ENCODE measurements at regions of chrX and their contacts with region 1.

Region 1: DNA sequence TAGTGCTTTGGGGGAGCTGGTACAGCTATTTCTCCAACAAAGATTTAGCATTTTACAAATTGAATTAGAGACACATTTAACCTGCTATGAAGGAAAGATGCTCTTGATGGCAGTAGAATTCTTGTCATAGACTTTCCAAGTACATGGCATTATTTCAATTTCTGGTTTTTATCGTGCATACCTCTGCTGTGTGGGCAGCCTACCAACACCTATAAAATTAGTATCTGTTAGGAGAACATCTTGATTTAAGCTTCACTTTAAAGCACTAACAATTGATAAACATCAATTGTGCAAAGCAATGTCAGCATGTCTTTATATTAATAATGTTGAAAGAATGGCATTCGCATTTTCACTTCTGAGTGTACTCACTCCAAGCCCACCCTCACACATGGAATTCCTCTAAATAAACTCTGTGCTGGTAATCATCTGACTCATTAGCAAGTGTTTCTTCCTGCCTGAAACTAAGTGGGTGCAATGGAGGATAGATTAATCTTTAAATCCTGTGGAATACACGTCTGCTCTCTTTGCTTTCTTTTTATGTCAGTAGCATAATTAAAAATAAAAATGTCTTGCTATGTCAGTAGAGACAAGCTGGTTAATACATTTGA is 279.8 kb upstream of the MAGEB18 start:
- DNase-seq: peak; percentile 73
- H3K4me3 ChIP-seq: no peak overlapping the region
- H3K27ac ChIP-seq: peak overlapping the region; percentile 45
- H3K4me1 ChIP-seq: peaks cover 5% of the 10 kb centered on the region
- H3K27me3 ChIP-seq: no peaks in the 10 kb centered on the region
- CTCF ChIP-seq: peak; percentile 13 to 16
- POLR2A ChIP-seq: no peak

Region 2: GRCh38 chrX:25721564-25721963 is 136.8 kb before region 1 on chrX:
- CTCF ChIA-PET with region 1: interaction called, 3 read pairs
- POLR2A ChIA-PET with region 1: no interaction called
- dilution Hi-C with region 1: no loop called
- intact Hi-C with region 1: loop called (anchors 10 kb)
- DNase-seq: peak; percentile 40
- H3K4me3 ChIP-seq: no peak overlapping the region
- H3K27ac ChIP-seq: no peak overlapping the region
- H3K4me1 ChIP-seq: no peaks in the 10 kb centered on the region
- H3K27me3 ChIP-seq: no peaks in the 10 kb centered on the region
- CTCF ChIP-seq: peak; percentile 12 to 23
- POLR2A ChIP-seq: no peak

Region 3: GRCh38 chrX:25873196-25873595 is 14.8 kb after region 1 on chrX:
- CTCF ChIA-PET with region 1: interaction called, 11 read pairs
- POLR2A ChIA-PET with region 1: no interaction called
- dilution Hi-C with region 1: no loop called
- intact Hi-C with region 1: no loop called
- DNase-seq: peak; percentile 30
- H3K4me3 ChIP-seq: no peak overlapping the region
- H3K27ac ChIP-seq: peak overlapping the region; percentile 7
- H3K4me1 ChIP-seq: peaks cover 25% of the 10 kb centered on the region
- H3K27me3 ChIP-seq: no peaks in the 10 kb centered on the region
- CTCF ChIP-seq: no peak
- POLR2A ChIP-seq: no peak

Region 4: GRCh38 chrX:25897758-25898157 is 39.4 kb after region 1 on chrX:
- CTCF ChIA-PET with region 1: no interaction called
- POLR2A ChIA-PET with region 1: no interaction called
- dilution Hi-C with region 1: no loop called
- intact Hi-C with region 1: no loop called
- DNase-seq: no peak
- H3K4me3 ChIP-seq: no peak overlapping the region
- H3K27ac ChIP-seq: no peak overlapping the region
- H3K4me1 ChIP-seq: no peaks in the 10 kb centered on the region
- H3K27me3 ChIP-seq: no peaks in the 10 kb centered on the region
- CTCF ChIP-seq: no peak
- POLR2A ChIP-seq: no peak

Region 5: DNA sequence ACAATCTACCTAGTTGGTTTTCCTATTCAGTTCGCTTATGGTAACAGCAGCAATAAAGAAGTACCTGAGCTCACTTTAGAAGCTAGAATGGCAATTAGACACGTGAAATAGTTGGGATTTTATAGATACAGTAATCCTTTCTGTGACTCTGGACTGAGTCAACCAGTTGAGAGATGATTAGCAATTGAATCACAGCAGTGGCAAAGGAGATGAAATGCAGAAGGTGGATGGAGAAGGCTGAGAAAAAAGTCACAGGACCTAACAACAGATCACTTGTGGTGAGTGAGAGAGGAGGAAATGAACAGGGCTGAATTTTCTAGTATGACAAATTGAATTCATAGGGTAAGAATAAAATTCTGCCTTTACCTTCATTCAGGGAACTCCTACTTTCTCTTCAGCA is 82.7 kb after region 1 on chrX:
- CTCF ChIA-PET with region 1: no interaction called
- POLR2A ChIA-PET with region 1: interaction called, 4 read pairs
- dilution Hi-C with region 1: no loop called
- intact Hi-C with region 1: loop called (anchors 1 kb)
- DNase-seq: peak; percentile 61
- H3K4me3 ChIP-seq: peak overlapping the region in 1 of 3 experiments; percentile 43
- H3K27ac ChIP-seq: peak overlapping the region; percentile 96
- H3K4me1 ChIP-seq: peaks cover 27% of the 10 kb centered on the region
- H3K27me3 ChIP-seq: no peaks in the 10 kb centered on the region
- CTCF ChIP-seq: no peak
- POLR2A ChIP-seq: no peak

Region 6: GRCh38 chrX:25968920-25969319 is 110.5 kb after region 1 on chrX:
- CTCF ChIA-PET with region 1: interaction called, 30 read pairs
- POLR2A ChIA-PET with region 1: no interaction called
- dilution Hi-C with region 1: no loop called
- intact Hi-C with region 1: loop called (anchors 1 kb)
- DNase-seq: peak; percentile 33
- H3K4me3 ChIP-seq: no peak overlapping the region
- H3K27ac ChIP-seq: no peak overlapping the region
- H3K4me1 ChIP-seq: no peaks in the 10 kb centered on the region
- H3K27me3 ChIP-seq: no peaks in the 10 kb centered on the region
- CTCF ChIP-seq: peak; percentile 49 to 53
- POLR2A ChIP-seq: no peak

Region 7: DNA sequence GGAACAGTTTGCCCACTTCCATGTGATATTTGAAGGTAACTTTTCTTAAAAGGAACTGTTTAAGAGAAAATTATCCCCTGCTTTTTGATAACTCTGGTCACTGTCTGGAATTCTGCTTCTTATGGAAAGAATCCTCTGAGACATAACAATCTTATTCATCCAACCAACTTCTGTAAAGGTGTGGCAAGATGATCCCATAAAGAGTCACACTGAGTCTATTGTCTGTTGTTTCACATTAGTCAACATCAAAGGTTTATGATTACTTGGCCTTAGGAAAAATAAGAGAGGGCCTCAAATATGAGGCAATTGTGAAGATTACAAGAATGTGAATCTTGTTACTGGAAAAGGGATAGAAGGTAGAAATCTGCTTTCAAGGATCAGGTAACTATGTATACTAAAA is 191.7 kb after region 1 on chrX:
- CTCF ChIA-PET with region 1: no interaction called
- POLR2A ChIA-PET with region 1: no interaction called
- dilution Hi-C with region 1: no loop called
- intact Hi-C with region 1: no loop called
- DNase-seq: no peak
- H3K4me3 ChIP-seq: no peak overlapping the region
- H3K27ac ChIP-seq: no peak overlapping the region
- H3K4me1 ChIP-seq: no peaks in the 10 kb centered on the region
- H3K27me3 ChIP-seq: no peaks in the 10 kb centered on the region
- CTCF ChIP-seq: no peak
- POLR2A ChIP-seq: no peak

Region 8: DNA sequence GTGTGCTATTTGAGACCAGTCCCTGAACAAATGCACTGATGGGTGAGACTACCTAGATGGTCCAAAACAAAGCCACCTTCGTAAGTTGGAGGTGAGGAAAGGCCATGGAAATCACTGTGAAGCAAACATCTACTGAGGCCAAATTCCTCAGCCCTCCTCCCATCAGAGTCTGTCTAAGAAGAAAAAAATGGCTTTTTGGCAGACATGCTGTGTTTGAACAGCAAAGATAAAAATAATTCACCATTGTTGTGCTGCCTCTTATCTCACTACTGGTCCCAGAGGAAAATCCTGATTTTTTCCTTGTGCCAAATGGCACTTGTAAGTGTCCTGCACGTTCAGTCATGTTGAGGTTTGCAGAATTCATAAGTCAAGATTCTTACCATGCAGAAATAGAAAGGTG is 287.6 kb after region 1 on chrX:
- CTCF ChIA-PET with region 1: no interaction called
- POLR2A ChIA-PET with region 1: no interaction called
- dilution Hi-C with region 1: no loop called
- intact Hi-C with region 1: loop called (anchors 5 kb)
- DNase-seq: peak; percentile 41
- H3K4me3 ChIP-seq: no peak overlapping the region
- H3K27ac ChIP-seq: no peak overlapping the region
- H3K4me1 ChIP-seq: no peaks in the 10 kb centered on the region
- H3K27me3 ChIP-seq: no peaks in the 10 kb centered on the region
- CTCF ChIP-seq: no peak
- POLR2A ChIP-seq: no peak

Region 9: GRCh38 chrX:26649534-26649933 is 791.2 kb after region 1 on chrX:
- CTCF ChIA-PET with region 1: interaction called, 6 read pairs
- POLR2A ChIA-PET with region 1: no interaction called
- dilution Hi-C with region 1: no loop called
- intact Hi-C with region 1: loop called (anchors 2 kb)
- DNase-seq: no peak
- H3K4me3 ChIP-seq: no peak overlapping the region
- H3K27ac ChIP-seq: no peak overlapping the region
- H3K4me1 ChIP-seq: no peaks in the 10 kb centered on the region
- H3K27me3 ChIP-seq: no peaks in the 10 kb centered on the region
- CTCF ChIP-seq: peak; percentile 8 to 21
- POLR2A ChIP-seq: no peak

Region 10: DNA sequence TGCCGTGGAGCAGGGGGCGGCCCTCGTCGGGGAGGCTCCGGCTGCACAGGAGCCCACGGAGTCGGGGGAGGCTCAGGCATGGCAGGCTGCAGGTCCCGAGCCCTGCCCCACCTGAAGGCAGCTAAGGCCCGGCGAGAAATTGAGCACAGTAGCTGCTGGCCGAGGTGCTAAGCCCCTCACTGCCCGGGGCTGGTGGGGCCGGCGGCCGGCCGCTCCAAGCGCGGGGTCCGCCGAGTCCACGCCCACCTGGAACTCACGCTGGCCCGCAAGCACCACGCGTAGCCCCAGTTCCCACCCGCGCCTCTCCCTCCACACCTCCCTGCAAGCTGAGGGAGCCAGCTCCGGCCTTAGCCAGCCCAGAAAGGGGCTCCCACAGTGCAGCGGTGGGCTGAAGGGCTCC is 1015.4 kb after region 1 on chrX:
- CTCF ChIA-PET with region 1: no interaction called
- POLR2A ChIA-PET with region 1: no interaction called
- dilution Hi-C with region 1: no loop called
- intact Hi-C with region 1: no loop called
- DNase-seq: no peak
- H3K4me3 ChIP-seq: no peak overlapping the region
- H3K27ac ChIP-seq: no peak overlapping the region
- H3K4me1 ChIP-seq: no peaks in the 10 kb centered on the region
- H3K27me3 ChIP-seq: no peaks in the 10 kb centered on the region
- CTCF ChIP-seq: no peak
- POLR2A ChIP-seq: no peak